ENCODE measurements at regions of chr18 and their contacts with region 1.

Region 1: DNA sequence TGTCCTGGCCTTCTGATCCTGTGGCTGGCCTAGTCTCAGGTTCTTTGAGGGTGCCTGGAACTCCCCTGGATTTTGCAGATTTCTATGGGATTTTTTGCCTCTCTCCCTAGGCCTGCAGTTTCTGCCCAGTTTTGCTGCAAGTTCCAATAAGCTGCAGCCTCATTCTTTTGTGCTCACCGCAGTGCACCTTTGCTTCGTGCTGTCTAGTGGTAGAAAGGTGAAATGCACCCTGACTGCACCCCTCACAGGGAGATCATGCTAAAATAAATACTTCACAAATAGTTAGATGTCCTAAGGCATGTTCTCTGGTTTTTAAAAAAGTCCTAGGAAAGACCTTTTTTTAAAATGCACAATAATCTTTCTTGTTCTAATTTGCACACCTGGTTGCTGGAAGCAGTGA is 72.5 kb downstream of the GNAL start:
- DNase-seq: no peak
- H3K4me3 ChIP-seq: no peak overlapping the region
- H3K27ac ChIP-seq: no peak overlapping the region
- H3K4me1 ChIP-seq: no peaks in the 10 kb centered on the region
- H3K27me3 ChIP-seq: no peaks in the 10 kb centered on the region
- CTCF ChIP-seq: peak in 1 of 6 experiments; percentile 17
- POLR2A ChIP-seq: no peak

Region 2: GRCh38 chr18:11826836-11827235 is 65.3 kb after region 1 on chr18:
- intact Hi-C with region 1: loop called (anchors 10 kb)
- DNase-seq: no peak
- H3K4me3 ChIP-seq: no peak overlapping the region
- H3K27ac ChIP-seq: no peak overlapping the region
- H3K4me1 ChIP-seq: no peaks in the 10 kb centered on the region
- H3K27me3 ChIP-seq: no peaks in the 10 kb centered on the region
- CTCF ChIP-seq: no peak
- POLR2A ChIP-seq: no peak

Measured in thyroid gland (tissue), 4 donors.